Heart left ventricle (tissue), 16 donors: ENCODE measurements at regions of chr6 and their contacts with region 1.

Region 1: DNA sequence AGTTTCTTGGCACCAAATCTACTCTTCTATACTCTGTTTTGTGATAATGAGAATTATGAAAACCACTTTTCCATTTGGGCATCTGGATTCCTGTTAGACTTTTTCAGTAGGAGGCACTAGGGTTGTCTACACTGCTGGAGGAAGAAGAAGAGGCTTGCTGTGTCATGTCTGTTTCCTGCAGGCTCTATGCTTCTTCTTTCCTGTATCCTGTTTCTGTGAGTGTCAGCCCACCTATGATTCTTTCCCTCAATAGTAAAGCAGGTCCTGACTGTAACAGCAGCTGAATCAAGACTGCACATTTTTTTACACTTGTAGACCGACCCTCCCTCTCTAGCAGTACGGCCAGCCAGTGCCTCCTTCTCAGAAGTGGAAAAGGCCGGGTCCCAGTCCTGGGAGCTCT is 603.9 kb downstream of the HDGFL1 start:
- DNase-seq: no peak
- ATAC-seq: no peak
- H3K4me3 ChIP-seq: no peak overlapping the region
- H3K27ac ChIP-seq: no peak overlapping the region
- H3K4me1 ChIP-seq: peaks cover 0 to 8% (median 0%) of the 10 kb centered on the region in 12 donors
- H3K27me3 ChIP-seq: no peaks in the 10 kb centered on the region
- CTCF ChIP-seq: no peak
- POLR2A ChIP-seq: no peak

Region 2: DNA sequence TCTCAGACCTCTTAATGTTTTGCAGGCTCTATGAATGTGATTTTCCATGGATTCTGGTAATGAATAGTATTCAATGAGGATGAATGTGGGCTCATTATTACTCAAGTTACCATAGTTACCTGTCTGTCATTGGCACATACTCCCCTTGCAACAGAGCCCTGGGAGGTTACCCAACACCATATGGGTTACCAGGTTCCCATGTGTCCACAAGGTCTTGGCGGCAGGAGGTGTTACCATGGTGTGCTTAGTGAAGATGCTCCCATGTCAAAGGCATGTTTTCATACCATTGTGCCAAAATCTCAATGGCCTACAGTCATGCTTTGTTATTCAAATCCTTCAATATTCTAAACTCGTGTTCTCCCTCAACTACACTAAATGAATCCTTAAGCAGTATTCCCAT is 371.4 kb before region 1 on chr6:
- intact Hi-C with region 1: no loop called
- DNase-seq: no peak
- ATAC-seq: no peak
- H3K4me3 ChIP-seq: no peak overlapping the region
- H3K27ac ChIP-seq: no peak overlapping the region
- H3K4me1 ChIP-seq: no peaks in the 10 kb centered on the region
- H3K27me3 ChIP-seq: no peaks in the 10 kb centered on the region
- CTCF ChIP-seq: no peak
- POLR2A ChIP-seq: no peak

Region 3: DNA sequence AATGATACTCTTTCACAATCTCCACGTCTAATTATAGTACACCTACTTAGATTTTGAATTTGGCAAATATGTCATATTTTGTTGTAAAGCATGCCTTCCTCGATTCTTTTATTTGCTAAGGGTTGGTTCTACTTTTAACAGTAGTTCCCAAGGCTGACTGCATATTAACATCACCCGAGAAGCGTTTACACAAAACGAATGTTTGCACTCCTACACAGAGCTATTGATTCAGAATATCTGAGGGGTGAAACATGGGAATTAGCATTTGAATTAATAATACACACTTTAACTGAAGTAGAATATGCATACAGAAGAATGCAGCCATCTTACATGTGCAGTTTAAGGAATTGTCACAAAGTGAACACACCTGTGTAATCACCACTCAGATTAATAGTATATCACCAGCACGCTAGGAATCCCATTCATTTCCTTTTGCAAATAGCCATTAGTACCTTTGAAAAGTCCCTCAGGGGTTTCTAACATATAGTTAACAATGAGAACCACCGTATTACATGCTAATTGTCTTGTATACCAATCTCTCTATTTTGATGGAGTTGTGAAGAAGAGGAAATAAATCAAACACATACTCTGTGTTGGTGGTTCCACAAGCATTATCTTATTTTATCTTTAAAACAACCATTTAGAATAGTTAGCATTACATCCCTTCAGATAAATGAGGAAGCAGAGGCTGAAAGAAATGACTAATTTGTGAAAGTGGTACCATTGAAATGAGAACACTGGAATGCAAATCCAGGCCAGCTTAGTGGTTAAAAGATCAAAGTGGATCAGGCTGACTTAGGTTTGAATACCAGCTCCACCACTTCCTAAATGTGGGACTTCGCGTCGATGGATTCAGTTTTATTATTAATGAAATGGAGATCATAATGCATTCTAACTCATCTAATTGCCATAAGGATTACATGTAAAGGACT is 286.3 kb before region 1 on chr6:
- intact Hi-C with region 1: no loop called
- DNase-seq: no peak
- ATAC-seq: no peak
- H3K4me3 ChIP-seq: no peak overlapping the region
- H3K27ac ChIP-seq: no peak overlapping the region
- H3K4me1 ChIP-seq: peaks cover 0 to 38% (median 9%) of the 10 kb centered on the region in 12 donors
- H3K27me3 ChIP-seq: no peaks in the 10 kb centered on the region
- CTCF ChIP-seq: no peak
- POLR2A ChIP-seq: no peak

Region 4: GRCh38 chr6:23213193-23214050 is 40.2 kb after region 1 on chr6:
- intact Hi-C with region 1: loop called in 1 of 10 experiments (anchors 5 kb)
- DNase-seq: no peak
- ATAC-seq: no peak
- H3K4me3 ChIP-seq: no peak overlapping the region
- H3K27ac ChIP-seq: no peak overlapping the region
- H3K4me1 ChIP-seq: no peaks in the 10 kb centered on the region
- H3K27me3 ChIP-seq: no peaks in the 10 kb centered on the region
- CTCF ChIP-seq: no peak
- POLR2A ChIP-seq: no peak